ENCODE measurements at regions of chr1 and their contacts with region 1.

Region 1: DNA sequence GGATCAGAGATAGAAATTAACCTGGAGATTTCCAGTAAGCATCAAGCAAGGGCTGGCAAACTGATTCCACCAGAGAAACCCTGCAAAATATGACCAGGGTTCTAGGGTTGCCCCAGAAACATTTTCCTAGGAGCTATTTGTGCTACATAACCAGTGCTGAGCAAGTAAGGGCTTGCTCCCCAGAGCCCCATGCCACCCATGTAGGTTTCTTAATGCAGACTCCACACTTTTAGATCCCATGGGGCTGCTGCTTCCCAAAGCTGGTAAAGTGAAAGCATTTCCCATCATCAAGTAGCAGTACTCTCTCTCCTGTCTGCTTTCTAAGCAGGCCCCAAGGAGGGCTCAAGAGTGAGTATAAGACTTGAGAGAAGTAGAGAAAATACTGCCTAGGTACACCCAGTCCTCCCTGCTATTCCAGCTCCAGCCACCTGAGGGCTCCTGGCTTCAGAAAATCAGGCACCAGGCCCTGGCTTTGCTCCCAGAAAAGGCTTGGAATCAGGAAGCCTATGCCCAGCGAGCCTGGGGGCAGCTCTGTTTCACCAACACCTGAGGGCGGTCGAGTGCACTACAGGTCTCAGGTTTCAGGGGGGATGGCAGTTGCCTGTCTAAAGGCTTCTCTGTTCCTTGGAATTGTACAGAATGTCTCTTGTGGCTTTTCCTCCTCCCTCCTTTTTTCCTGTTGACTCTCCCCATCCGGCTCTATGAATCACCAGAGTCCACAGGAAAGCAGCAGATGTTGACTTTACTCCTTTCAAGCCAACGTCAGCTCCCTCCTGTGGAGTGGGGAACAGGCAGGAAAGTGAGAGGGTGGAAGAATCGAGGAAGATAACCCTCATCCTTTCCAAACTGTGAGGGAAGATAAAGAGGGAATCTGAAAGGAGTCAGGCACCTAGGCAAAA is 6.2 kb upstream of the ANKRD35 start:
- DNase-seq: peak; percentile 100
- H3K4me3 Mint-ChIP-seq: peak overlapping the region; percentile 57
- H3K27ac Mint-ChIP-seq: peak overlapping the region; percentile 95
- H3K4me1 Mint-ChIP-seq: peaks cover 36% of the 10 kb centered on the region
- H3K27me3 Mint-ChIP-seq: no peaks in the 10 kb centered on the region
- CTCF ChIP-seq: peak; percentile 98

Region 2: DNA sequence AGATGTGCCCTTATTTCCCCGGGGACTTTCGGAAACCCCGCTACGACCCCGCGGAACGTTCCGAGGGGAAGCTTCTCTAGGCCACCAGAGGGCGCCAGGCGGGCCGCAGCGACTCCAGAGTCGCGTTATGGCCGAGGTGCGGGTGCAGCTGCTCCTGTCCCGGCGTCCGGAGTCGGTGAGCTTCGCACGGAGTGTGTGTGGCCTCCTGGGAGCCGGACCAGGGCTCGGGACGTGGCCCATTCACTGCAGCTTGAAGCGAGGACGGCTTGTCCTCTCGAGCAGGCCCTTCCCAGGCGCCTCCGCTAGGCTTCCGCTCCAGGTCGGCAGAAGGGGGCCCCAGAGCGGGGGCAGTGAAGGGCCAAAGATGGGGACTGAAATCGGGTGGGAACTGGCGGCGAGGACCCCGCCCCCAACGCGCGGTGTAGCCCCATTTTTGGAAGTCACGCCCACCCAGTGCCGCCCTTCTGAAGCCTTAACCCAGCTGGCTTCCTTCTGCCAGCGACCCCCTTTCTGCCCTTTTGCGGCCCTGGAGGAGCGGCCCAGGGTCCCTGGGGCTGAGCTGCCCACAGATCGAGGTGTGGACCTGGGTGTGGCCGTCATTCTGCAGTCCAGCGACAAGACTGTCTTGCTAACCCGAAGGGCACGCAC is 46.2 kb before region 1 on chr1 and contains the start of gene NUDT17:
- CTCF ChIA-PET with region 1: interaction called, 92 read pairs
- POLR2A ChIA-PET with region 1: interaction called, 31 read pairs
- intact Hi-C with region 1: no loop called
- DNase-seq: peak; percentile 81
- H3K4me3 Mint-ChIP-seq: no peak within 1 kb of the TSS
- H3K27ac Mint-ChIP-seq: peak within 1 kb of the TSS; percentile 67
- H3K4me1 Mint-ChIP-seq: peaks cover 12% of the 10 kb centered on the region
- H3K27me3 Mint-ChIP-seq: no peaks in the 10 kb centered on the region
- CTCF ChIP-seq: peak; percentile 100
- total RNA-seq, gene NUDT17: 3.7 and 4.6 TPM in 2 replicates

Region 3: GRCh38 chr1:145879775-145880174 is 12.1 kb before region 1 on chr1:
- CTCF ChIA-PET with region 1: interaction called, 98 read pairs
- POLR2A ChIA-PET with region 1: interaction called, 18 read pairs
- intact Hi-C with region 1: no loop called
- DNase-seq: no peak
- H3K4me3 Mint-ChIP-seq: no peak overlapping the region
- H3K27ac Mint-ChIP-seq: no peak overlapping the region
- H3K4me1 Mint-ChIP-seq: peaks cover 28% of the 10 kb centered on the region
- H3K27me3 Mint-ChIP-seq: peaks cover 2% of the 10 kb centered on the region
- CTCF ChIP-seq: no peak

Region 4: DNA sequence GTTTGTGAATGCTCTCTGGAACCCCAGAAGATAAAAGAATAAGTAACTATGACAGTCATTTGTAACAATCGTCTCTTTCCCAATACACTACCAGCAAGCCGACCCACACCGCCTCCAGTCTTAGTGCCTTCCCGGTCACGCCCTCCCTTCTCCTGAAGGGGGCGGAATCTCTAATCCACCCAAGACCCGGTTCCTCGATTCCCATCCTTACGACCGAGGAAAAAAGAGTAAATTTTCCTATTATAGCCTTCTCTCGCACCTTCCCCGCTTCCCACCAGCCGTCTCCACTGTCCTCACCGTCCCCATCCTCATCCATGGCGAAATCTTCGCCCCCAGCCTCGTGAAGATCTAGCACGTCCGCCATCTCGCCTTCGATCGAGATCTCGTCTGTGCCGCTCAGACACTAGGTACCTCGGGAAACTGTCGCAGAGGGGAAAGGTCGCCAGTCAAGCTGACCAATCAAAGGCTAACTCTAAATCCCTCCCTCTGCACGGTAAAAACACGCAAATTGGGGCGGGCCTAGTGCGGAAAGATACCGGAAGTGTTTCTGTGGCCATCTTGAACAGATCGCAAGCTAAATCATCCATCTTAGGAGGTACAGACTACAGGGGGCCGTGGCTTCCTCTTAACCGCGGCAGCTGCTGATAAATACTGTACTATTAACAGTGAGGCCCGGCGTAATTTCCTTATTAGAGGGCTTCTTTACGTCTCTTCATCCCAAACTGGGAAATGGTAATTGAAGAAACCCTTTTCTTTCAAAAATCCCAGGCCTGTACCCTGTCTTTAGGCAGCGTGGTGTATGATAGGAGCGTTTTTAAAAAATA is 35.4 kb after region 1 on chr1 and contains the start of gene RBM8A:
- CTCF ChIA-PET with region 1: interaction called, 26 read pairs
- POLR2A ChIA-PET with region 1: interaction called, 81 read pairs
- intact Hi-C with region 1: loop called (anchors 1 kb)
- DNase-seq: peak; percentile 100
- H3K4me3 Mint-ChIP-seq: no peak within 1 kb of the TSS
- H3K27ac Mint-ChIP-seq: no peak within 1 kb of the TSS
- H3K4me1 Mint-ChIP-seq: peaks cover 14% of the 10 kb centered on the region
- H3K27me3 Mint-ChIP-seq: no peaks in the 10 kb centered on the region
- CTCF ChIP-seq: peak; percentile 76
- total RNA-seq, gene RBM8A: 370 and 403 TPM in 2 replicates

Region 5: GRCh38 chr1:145978854-145979759 is 87.3 kb after region 1 on chr1:
- CTCF ChIA-PET with region 1: interaction called, 58 read pairs
- POLR2A ChIA-PET with region 1: interaction called, 26 read pairs
- intact Hi-C with region 1: loop called (anchors 1 kb)
- DNase-seq: peak; percentile 100
- H3K4me3 Mint-ChIP-seq: no peak overlapping the region
- H3K27ac Mint-ChIP-seq: no peak overlapping the region
- H3K4me1 Mint-ChIP-seq: peaks cover 11% of the 10 kb centered on the region
- H3K27me3 Mint-ChIP-seq: no peaks in the 10 kb centered on the region
- CTCF ChIP-seq: peak; percentile 18

Region 6: DNA sequence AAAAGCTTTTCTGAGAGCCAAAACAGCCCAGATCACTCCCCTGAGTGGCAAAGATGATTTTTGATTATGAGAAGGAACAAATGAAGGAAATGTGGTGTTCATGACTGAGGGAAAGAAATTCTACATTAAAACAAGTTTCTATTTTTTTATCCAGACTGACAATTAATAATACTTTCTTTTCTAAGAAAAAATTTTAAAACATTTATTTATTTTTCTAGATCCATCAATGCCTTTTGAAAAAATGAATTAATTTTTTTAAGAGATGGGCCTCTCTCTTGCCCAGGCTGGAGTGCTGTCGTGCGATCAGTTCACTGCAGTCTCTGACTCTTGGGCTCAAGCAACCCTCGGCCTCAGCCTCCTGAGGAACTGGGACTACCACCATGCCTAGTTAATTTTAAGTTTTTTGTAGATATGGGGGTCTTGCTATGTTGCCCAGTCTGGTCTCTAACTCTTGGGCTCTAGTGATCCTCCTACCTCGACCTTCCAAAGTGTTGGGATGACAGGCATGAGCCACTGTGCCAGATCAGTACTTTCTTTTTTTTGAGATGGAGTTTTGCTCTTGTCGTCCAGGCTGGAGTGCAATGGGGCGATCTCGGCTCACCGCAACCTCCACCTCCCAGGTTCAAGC is 115.8 kb after region 1 on chr1:
- CTCF ChIA-PET with region 1: interaction called, 78 read pairs
- POLR2A ChIA-PET with region 1: interaction called, 30 read pairs
- intact Hi-C with region 1: loop called (anchors 1 kb)
- DNase-seq: no peak
- H3K4me3 Mint-ChIP-seq: peak overlapping the region; percentile 64
- H3K27ac Mint-ChIP-seq: peak overlapping the region; percentile 97
- H3K4me1 Mint-ChIP-seq: peaks cover 33% of the 10 kb centered on the region
- H3K27me3 Mint-ChIP-seq: no peaks in the 10 kb centered on the region
- CTCF ChIP-seq: no peak

Region 7: DNA sequence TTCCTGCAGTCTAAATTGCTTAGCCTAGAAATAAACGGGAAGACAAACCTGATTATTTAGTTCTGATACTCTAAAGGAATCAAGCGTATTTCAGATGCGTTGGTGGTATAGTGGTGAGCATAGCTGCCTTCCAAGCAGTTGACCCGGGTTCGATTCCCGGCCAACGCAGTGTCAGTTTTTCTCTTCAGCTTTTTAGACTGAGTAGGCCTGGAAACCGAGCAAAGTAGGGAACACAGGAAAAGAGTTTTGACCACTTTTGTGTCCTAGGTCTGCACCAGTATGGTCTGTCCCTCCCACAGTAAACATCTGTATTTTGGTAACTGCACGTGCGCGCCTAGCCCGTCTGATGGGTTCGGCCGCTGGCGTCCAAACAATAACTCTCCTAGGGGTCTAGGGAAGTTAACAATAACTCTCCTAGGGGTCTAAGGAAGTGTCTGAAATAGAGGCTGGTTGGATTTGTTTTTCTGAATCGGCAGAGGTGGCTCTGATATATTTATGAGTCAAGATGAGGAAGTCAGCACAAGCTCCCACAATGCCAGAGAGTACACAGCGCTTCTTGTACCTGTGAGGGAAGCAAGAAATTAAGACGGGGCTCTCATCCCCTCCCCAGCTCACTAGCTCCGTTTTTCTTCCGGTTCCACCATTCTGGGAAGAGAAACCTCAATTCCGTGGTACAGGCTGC is 145.3 kb after region 1 on chr1:
- CTCF ChIA-PET with region 1: interaction called, 24 read pairs
- POLR2A ChIA-PET with region 1: interaction called, 30 read pairs
- intact Hi-C with region 1: no loop called
- DNase-seq: peak; percentile 95
- H3K4me3 Mint-ChIP-seq: peak overlapping the region; percentile 99
- H3K27ac Mint-ChIP-seq: peak overlapping the region; percentile 98
- H3K4me1 Mint-ChIP-seq: peaks cover 11% of the 10 kb centered on the region
- H3K27me3 Mint-ChIP-seq: no peaks in the 10 kb centered on the region
- CTCF ChIP-seq: no peak

Measured in MCF 10A (cell line).